ENCODE measurements at regions of chr2 and their contacts with region 1.

Region 1: DNA sequence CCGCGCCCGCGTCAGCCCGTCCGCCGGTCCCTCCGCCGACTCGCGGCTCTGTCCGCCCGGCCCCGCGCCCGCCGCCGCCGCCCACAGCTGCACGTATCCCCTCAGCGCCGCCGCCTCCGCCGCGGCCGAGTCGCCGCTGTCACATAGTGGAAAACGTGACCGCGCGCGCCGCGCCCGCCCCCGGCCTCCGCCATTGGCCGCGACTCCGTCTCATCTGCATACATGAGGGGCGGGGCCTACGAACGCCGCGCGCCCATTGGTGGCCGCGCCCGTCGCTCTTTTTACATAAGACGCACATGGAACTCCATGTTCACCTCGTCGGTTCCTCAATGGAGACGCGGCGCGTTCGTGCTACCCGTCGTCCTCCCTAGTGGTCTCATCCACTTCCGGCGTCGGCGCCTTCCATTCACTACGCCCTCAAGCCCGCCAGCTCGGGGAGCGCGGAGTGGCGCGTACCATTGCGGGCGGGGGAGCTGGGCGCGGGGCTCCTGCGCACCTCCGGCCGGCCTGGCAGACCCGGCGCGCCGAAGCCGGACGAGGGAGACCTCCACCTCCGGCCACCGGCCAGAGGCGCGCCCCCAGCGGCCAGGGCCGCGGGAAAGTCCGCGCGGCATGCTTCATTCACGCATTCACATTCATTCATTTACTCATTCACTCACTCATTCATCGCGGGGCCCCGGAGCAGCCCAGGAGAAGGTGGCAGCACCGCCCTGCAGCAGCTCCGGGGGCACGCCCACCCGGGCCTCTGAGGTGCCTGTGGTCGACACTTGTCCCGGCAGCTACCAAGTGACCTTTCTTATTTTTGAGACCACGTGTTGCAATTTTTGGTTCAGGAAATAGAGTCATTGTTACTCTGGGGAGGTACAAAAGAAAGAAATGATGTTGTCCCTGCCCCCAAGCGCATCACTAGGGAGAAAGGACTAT is 502 bp upstream of the PER2 start:
- DNase-seq: peak; percentile 98
- H3K4me3 Mint-ChIP-seq: peak overlapping the region; percentile 74
- H3K27ac Mint-ChIP-seq: peak overlapping the region; percentile 99
- H3K4me1 Mint-ChIP-seq: peaks cover 43% of the 10 kb centered on the region
- H3K27me3 Mint-ChIP-seq: no peaks in the 10 kb centered on the region
- CTCF ChIP-seq: peak; percentile 19

Region 2: GRCh38 chr2:238256594-238257104 is 32.3 kb before region 1 on chr2:
- CTCF ChIA-PET with region 1: interaction called, 8 read pairs
- POLR2A ChIA-PET with region 1: interaction called, 3 read pairs
- intact Hi-C with region 1: loop called (anchors 2 kb)
- DNase-seq: peak; percentile 92
- H3K4me3 Mint-ChIP-seq: no peak overlapping the region
- H3K27ac Mint-ChIP-seq: no peak overlapping the region
- H3K4me1 Mint-ChIP-seq: no peaks in the 10 kb centered on the region
- H3K27me3 Mint-ChIP-seq: no peaks in the 10 kb centered on the region
- CTCF ChIP-seq: peak; percentile 97

Region 3: DNA sequence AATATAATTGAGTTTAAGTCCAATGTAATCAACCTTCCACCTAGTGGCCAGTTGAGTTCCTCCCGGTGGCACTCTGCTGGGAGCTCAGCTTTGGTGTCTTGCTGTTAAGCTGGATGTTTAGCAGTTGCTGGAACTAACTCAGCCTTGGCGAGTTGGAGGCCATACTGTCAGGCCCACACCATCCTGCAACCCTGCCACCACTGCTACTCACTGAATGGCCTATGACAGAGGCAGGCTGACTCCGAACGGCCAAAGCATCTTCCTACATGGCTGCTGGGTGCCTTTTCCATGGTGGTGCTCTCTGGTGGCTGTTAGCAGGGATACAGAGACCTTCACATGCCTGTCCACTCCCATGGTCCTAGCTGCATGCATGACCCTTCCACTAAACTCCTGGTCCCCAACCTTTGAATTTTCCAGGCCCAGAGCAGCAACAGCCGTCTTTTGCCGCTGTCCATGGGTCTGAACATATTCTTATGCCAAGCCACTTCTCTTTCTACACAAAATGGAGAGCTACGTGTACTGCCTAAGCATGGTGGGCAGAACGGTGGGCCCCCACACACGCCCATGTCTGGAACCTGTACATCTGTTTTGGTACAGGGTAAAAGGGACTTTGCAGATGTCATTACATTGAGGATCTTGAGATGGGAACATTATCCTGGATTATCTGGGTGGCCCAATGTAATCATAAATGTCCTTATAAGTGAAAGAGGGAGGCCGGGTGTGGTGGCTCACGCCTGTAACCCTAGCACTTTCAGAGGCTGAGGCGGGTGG is 16.4 kb after region 1 on chr2:
- CTCF ChIA-PET with region 1: interaction called, 12 read pairs
- POLR2A ChIA-PET with region 1: interaction called, 47 read pairs
- intact Hi-C with region 1: no loop called
- DNase-seq: peak; percentile 48
- H3K4me3 Mint-ChIP-seq: no peak overlapping the region
- H3K27ac Mint-ChIP-seq: peak overlapping the region; percentile 5
- H3K4me1 Mint-ChIP-seq: no peaks in the 10 kb centered on the region
- H3K27me3 Mint-ChIP-seq: no peaks in the 10 kb centered on the region
- CTCF ChIP-seq: peak; percentile 42

Region 4: GRCh38 chr2:238389926-238390597 is 101.2 kb after region 1 on chr2:
- CTCF ChIA-PET with region 1: no interaction called
- POLR2A ChIA-PET with region 1: interaction called, 13 read pairs
- intact Hi-C with region 1: no loop called
- DNase-seq: peak; percentile 46
- H3K4me3 Mint-ChIP-seq: peak overlapping the region; percentile 1
- H3K27ac Mint-ChIP-seq: peak overlapping the region; percentile 86
- H3K4me1 Mint-ChIP-seq: peaks cover 6% of the 10 kb centered on the region
- H3K27me3 Mint-ChIP-seq: no peaks in the 10 kb centered on the region
- CTCF ChIP-seq: no peak

Measured in MCF 10A (cell line).